ENCODE measurements at regions of chr4 and their contacts with region 1.

Region 1: DNA sequence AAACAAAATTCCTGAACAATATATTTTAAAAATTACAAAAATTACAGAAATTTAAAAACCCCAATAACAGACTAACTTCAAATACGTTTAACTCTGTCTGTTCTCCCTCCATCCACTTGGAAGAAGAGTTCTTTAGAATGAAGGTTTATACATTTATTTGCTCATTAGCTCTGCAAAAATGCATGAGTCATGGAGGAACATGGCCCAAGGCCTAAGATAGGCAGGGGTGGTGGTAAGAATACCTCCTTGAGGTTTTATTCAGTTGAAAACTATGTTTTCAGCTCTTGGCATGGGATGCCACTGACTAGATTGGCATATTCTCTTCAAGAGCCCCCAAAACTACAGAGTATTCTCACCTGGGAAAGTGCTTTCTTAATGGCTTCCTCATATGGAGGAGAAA is 8.8 kb upstream of the LRRC66 start:
- DNase-seq: no peak
- H3K4me3 ChIP-seq: no peak overlapping the region
- H3K4me3 Mint-ChIP-seq: no peak overlapping the region
- H3K27ac ChIP-seq: no peak overlapping the region
- H3K27ac Mint-ChIP-seq: no peak overlapping the region
- H3K4me1 ChIP-seq: no peaks in the 10 kb centered on the region
- H3K4me1 Mint-ChIP-seq: peaks cover 0 to 5% (median 0%) of the 10 kb centered on the region in 4 donors
- H3K27me3 ChIP-seq: no peaks in the 10 kb centered on the region
- H3K27me3 Mint-ChIP-seq: no peaks in the 10 kb centered on the region

Region 2: GRCh38 chr4:51831133-51831532 is 197.8 kb before region 1 on chr4:
- CTCF ChIA-PET with region 1: interaction called, 22 read pairs
- POLR2A ChIA-PET with region 1: no interaction called
- intact Hi-C with region 1: loop called (anchors 1 kb)
- DNase-seq: peak; percentile 48 to 64 (median 57)
- H3K4me3 ChIP-seq: no peak overlapping the region
- H3K4me3 Mint-ChIP-seq: no peak overlapping the region
- H3K27ac ChIP-seq: no peak overlapping the region
- H3K27ac Mint-ChIP-seq: no peak overlapping the region
- H3K4me1 ChIP-seq: no peaks in the 10 kb centered on the region
- H3K4me1 Mint-ChIP-seq: no peaks in the 10 kb centered on the region
- H3K27me3 ChIP-seq: no peaks in the 10 kb centered on the region
- H3K27me3 Mint-ChIP-seq: peaks cover 1 to 11% of the 10 kb centered on the region in 2 donors

Measured in CD4-positive, alpha-beta memory T cell (primary cell).